ENCODE measurements at regions of chr4 and their contacts with region 1.

Region 1: DNA sequence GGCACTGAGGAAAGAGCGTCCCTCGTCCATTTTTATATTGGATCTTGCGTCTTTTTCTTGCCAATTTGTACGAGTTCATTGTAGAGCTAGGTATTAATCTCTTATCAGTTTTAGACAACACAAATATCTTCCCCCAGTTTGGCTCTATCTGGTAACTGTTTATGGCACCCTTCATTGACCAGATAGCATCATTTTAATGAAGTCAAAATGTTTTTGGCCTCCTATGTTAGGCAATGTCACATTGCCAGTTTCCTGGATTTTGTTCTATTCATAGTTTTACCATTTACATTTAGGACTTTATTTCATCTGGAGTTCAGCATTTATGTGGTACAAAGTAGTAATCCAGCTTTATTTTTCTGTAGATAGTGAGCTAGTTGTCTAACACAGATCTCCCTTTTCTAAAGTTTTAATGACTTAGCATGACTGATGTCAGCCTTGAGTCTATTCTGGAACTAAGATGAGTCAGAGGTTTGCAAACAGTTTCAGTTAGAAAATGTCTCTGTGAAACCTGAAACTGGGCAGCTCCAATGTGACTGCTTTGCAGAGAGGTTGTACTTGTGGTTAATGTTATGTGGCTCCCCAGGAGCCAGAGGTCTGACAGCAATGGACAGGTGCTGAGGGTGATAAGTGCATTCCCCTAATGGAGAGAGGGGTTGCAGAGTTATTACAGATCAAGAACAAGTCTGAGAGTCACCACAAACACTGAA is 5.3 kb upstream of the STBD1 start:
- DNase-seq: peak; percentile 82
- H3K4me3 Mint-ChIP-seq: no peak overlapping the region
- H3K27ac Mint-ChIP-seq: peak overlapping the region; percentile 66
- H3K4me1 Mint-ChIP-seq: peaks cover 39% of the 10 kb centered on the region
- H3K27me3 Mint-ChIP-seq: peaks cover 9% of the 10 kb centered on the region

Region 2: DNA sequence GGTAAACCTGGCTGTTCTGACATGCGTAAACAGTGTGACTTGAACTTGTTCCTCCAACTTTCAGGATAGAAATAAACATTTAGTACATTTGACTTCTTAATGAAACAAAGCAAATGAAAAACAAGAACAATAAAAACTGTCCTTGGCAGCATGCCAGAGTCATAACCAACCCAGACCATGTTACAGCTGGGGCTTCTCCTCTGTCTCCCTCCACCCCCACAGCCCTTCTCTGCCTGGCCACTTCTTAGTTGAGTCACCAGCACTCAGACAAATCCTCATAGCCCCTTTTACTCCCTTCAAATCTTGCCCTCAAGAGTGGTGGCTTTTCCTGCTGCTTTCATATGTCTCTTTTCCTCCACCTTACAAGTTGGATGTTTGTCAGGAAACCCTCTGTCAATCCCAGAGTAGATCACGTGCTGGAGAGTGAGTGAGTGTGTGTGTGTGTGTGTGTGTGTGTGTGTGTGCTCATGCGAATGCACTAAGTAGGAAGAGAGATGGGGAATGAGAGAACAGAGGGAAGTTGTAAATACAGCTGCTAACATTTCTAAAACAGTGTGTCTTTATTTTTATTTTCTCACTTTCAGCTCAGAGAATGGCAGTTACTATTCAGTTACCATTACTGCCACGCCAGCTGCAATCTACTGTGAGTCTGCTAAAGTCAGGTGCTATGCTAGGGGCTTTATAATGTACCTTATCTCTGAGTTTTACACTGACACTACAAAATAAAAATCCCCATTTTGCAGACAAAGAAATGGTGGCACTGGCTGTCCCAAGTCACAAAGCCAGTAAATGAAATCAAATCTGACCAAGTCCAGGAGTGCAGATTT is 102.6 kb before region 1 on chr4:
- intact Hi-C with region 1: loop called (anchors 5 kb)
- DNase-seq: no peak
- H3K4me3 Mint-ChIP-seq: no peak overlapping the region
- H3K27ac Mint-ChIP-seq: peak overlapping the region; percentile 6
- H3K4me1 Mint-ChIP-seq: peaks cover 24% of the 10 kb centered on the region
- H3K27me3 Mint-ChIP-seq: no peaks in the 10 kb centered on the region

Region 3: GRCh38 chr4:76354517-76355473 is 53.6 kb after region 1 on chr4:
- intact Hi-C with region 1: loop called (anchors 1 kb)
- DNase-seq: peak; percentile 75
- H3K4me3 Mint-ChIP-seq: no peak overlapping the region
- H3K27ac Mint-ChIP-seq: no peak overlapping the region
- H3K4me1 Mint-ChIP-seq: peaks cover 9% of the 10 kb centered on the region
- H3K27me3 Mint-ChIP-seq: peaks cover 6% of the 10 kb centered on the region

Region 4: DNA sequence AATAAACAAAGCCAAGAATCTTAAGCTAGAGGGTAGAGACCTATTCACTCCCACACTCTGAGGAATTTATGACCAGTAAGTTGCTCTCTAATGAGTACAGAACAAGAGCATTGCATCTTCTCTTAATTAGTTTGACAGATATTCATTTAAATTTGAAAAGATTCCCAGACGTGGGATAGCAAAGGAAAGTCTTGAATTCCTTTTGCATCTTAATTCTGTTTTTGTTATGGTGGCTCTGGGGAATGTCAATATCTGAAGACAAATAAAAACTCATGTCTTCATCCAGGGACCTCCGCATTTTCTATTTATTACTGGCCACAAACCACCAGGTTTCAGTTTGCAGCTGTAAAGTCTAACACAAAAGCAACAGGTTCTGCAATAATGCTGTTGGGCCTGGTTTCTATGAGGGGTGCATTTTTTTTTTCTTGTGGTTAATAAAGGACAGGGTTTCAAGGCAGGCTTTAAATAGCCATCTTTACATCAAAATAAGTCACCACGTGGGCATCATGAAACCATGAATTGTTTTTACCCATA is 306.1 kb after region 1 on chr4:
- intact Hi-C with region 1: no loop called
- DNase-seq: no peak
- H3K4me3 Mint-ChIP-seq: no peak overlapping the region
- H3K27ac Mint-ChIP-seq: no peak overlapping the region
- H3K4me1 Mint-ChIP-seq: no peaks in the 10 kb centered on the region
- H3K27me3 Mint-ChIP-seq: peaks cover 27% of the 10 kb centered on the region

Measured in activated CD4-positive, alpha-beta T cell treated with anti-CD3 and anti-CD28 coated beads, Interleukin-2, amount 10 ng/mL, durations not matched to agents 24 days and 14 days (primary cell).